Caco-2 (cell line): ENCODE measurements at regions of chr17 and their contacts with region 1.

Region 1: GRCh38 chr17:49407981-49408501 is 6.6 kb downstream of the PHB1 start:
- DNase-seq: peak; percentile 96 to 98
- H3K4me3 ChIP-seq: no peak overlapping the region
- H3K4me3 Mint-ChIP-seq: no peak overlapping the region
- H3K27ac Mint-ChIP-seq: peak overlapping the region; percentile 17
- H3K4me1 ChIP-seq: peaks cover 5% of the 10 kb centered on the region; the same call in 1 of the 2 replicates
- H3K4me1 Mint-ChIP-seq: peaks cover 10% of the 10 kb centered on the region
- H3K27me3 ChIP-seq: no peaks in the 10 kb centered on the region
- H3K27me3 Mint-ChIP-seq: no peaks in the 10 kb centered on the region
- CTCF ChIP-seq: peak; percentile 100

Region 2: GRCh38 chr17:49239963-49240362 is 168.1 kb before region 1 on chr17:
- CTCF ChIA-PET with region 1: no interaction called
- POLR2A ChIA-PET with region 1: no interaction called
- intact Hi-C with region 1: no loop called
- DNase-seq: no peak
- H3K4me3 ChIP-seq: no peak overlapping the region
- H3K4me3 Mint-ChIP-seq: no peak overlapping the region
- H3K27ac Mint-ChIP-seq: no peak overlapping the region
- H3K4me1 ChIP-seq: peaks cover 5% of the 10 kb centered on the region
- H3K4me1 Mint-ChIP-seq: no peaks in the 10 kb centered on the region
- H3K27me3 ChIP-seq: no peaks in the 10 kb centered on the region
- H3K27me3 Mint-ChIP-seq: peaks cover 3% of the 10 kb centered on the region
- CTCF ChIP-seq: no peak

Region 3: GRCh38 chr17:49434821-49435670 is 27.0 kb after region 1 on chr17:
- CTCF ChIA-PET with region 1: interaction called, 10 read pairs
- POLR2A ChIA-PET with region 1: no interaction called
- intact Hi-C with region 1: loop called (anchors 1 kb)
- DNase-seq: peak; percentile 85 to 88
- H3K4me3 ChIP-seq: no peak overlapping the region
- H3K4me3 Mint-ChIP-seq: no peak overlapping the region
- H3K27ac Mint-ChIP-seq: no peak overlapping the region
- H3K4me1 ChIP-seq: no peaks in the 10 kb centered on the region
- H3K4me1 Mint-ChIP-seq: no peaks in the 10 kb centered on the region
- H3K27me3 ChIP-seq: peaks cover 5% of the 10 kb centered on the region
- H3K27me3 Mint-ChIP-seq: peaks cover 31% of the 10 kb centered on the region
- CTCF ChIP-seq: peak; percentile 97 to 99

Region 4: GRCh38 chr17:49527927-49528651 is 120.0 kb after region 1 on chr17:
- CTCF ChIA-PET with region 1: no interaction called
- POLR2A ChIA-PET with region 1: no interaction called
- intact Hi-C with region 1: no loop called
- DNase-seq: peak in 1 of 2 experiments; percentile 32
- H3K4me3 ChIP-seq: no peak overlapping the region
- H3K4me3 Mint-ChIP-seq: no peak overlapping the region
- H3K27ac Mint-ChIP-seq: no peak overlapping the region
- H3K4me1 ChIP-seq: no peaks in the 10 kb centered on the region
- H3K4me1 Mint-ChIP-seq: no peaks in the 10 kb centered on the region
- H3K27me3 ChIP-seq: no peaks in the 10 kb centered on the region
- H3K27me3 Mint-ChIP-seq: peaks cover 20% of the 10 kb centered on the region
- CTCF ChIP-seq: no peak

Region 5: GRCh38 chr17:49576917-49577649 is 169.0 kb after region 1 on chr17:
- CTCF ChIA-PET with region 1: no interaction called
- POLR2A ChIA-PET with region 1: no interaction called
- intact Hi-C with region 1: no loop called
- DNase-seq: peak in 1 of 2 experiments; percentile 47
- H3K4me3 ChIP-seq: peak overlapping the region; percentile 87
- H3K4me3 Mint-ChIP-seq: peak overlapping the region; percentile 77
- H3K27ac Mint-ChIP-seq: no peak overlapping the region
- H3K4me1 ChIP-seq: peaks cover 16% of the 10 kb centered on the region
- H3K4me1 Mint-ChIP-seq: peaks cover 7% of the 10 kb centered on the region
- H3K27me3 ChIP-seq: no peaks in the 10 kb centered on the region; the same call in 1 of the 2 replicates
- H3K27me3 Mint-ChIP-seq: peaks cover 14% of the 10 kb centered on the region
- CTCF ChIP-seq: no peak